Caco-2 (cell line): ENCODE measurements at regions of chr12 and their contacts with region 1.

Region 1: DNA sequence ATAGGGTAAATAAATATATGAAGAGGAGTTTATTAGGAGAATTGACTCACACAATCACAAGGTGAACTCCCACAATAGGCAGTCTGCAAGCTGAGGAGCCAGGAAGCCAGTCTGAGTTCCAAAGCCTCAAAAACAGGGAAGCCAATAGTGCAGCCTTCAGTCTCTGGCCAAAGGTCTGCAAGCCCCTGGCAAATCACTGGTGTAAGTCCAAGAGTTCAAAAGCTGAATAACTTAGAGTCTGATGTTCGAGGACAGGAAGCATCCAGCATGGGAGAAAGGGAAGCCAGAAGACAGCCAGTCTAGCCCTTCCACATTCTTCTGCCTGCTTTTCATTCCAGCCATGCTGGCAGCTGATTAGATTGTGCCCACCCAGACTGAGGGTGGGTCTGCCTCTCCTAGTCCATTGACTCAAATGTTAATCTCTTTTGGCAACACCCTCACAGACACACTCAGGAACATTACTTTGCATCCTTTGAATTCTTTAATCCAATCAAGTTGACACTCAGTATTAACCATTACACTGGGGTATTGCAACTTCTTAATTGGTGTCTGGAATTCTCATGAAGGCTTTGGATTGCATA is 736.5 kb upstream of the LMO3 start:
- DNase-seq: peak; percentile 33 to 50
- H3K4me3 ChIP-seq: no peak overlapping the region
- H3K4me3 Mint-ChIP-seq: no peak overlapping the region
- H3K27ac Mint-ChIP-seq: no peak overlapping the region
- H3K4me1 ChIP-seq: peaks cover 9% of the 10 kb centered on the region
- H3K4me1 Mint-ChIP-seq: peaks cover 18% of the 10 kb centered on the region
- H3K27me3 ChIP-seq: no peaks in the 10 kb centered on the region
- H3K27me3 Mint-ChIP-seq: no peaks in the 10 kb centered on the region
- CTCF ChIP-seq: no peak

Region 2: GRCh38 chr12:17326649-17327048 is 15.8 kb before region 1 on chr12:
- CTCF ChIA-PET with region 1: no interaction called
- POLR2A ChIA-PET with region 1: no interaction called
- intact Hi-C with region 1: loop called (anchors 2 kb)
- DNase-seq: peak; percentile 44 to 71
- H3K4me3 ChIP-seq: no peak overlapping the region
- H3K4me3 Mint-ChIP-seq: no peak overlapping the region
- H3K27ac Mint-ChIP-seq: no peak overlapping the region
- H3K4me1 ChIP-seq: peaks cover 20% of the 10 kb centered on the region
- H3K4me1 Mint-ChIP-seq: peaks cover 15% of the 10 kb centered on the region
- H3K27me3 ChIP-seq: no peaks in the 10 kb centered on the region
- H3K27me3 Mint-ChIP-seq: no peaks in the 10 kb centered on the region
- CTCF ChIP-seq: no peak